ENCODE measurements at regions of chr1 and their contacts with region 1.

Region 1: DNA sequence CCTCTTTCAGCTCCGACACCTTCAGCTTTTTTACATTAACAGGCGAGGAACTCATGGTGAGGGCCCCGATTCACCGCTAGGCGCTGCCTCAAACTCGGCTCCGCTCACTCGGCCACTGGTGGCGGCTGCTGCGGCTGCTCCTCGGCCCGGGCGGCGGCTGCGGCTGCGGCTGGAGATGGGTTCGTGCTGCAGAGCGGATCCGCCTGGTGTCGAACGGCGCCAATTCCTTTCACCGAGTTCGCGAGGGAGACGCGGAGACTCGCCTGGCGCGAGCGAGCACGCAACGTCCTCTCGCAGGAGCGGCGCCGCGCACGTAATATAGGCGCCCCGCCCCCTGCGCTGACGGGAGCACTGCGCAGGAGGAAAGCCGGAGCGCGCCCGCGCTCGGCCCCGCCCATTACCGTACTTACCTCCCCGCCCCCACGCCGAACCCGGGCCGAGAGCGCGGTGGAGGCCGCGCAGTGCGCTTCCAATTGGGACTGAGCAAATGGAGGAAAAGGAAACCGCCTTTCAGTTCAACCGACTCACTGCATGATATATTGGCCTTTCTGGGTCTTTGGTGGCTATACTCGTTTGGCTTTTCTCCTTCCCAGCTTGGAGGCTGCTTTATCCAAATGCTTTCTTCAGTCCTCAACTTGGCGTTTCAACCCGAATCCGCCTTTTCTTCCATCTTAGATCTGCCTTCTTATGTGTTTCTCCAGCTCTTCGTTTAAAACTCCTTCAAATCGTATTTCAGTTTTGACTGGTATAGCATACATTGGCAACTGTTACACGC is at the start of gene HNRNPU:
- DNase-seq: peak; percentile 99
- H3K4me3 ChIP-seq: peak within 1 kb of the TSS; percentile 92 to 99 (median 98)
- H3K27ac ChIP-seq: peak within 1 kb of the TSS; percentile 99 to 100 (median 100)
- H3K4me1 ChIP-seq: peaks cover 0 to 41% (median 37%) of the 10 kb centered on the region in 4 donors
- H3K27me3 ChIP-seq: no peaks in the 10 kb centered on the region
- CTCF ChIP-seq: peak in 2 of 4 experiments; percentile 14 to 47
- EP300 ChIP-seq: peak in 2 of 4 donors; percentile 69 to 82
- POLR2A ChIP-seq: peak; percentile 92 to 97
- total RNA-seq, gene HNRNPU: 264 to 339 (median 282) TPM

Region 2: GRCh38 chr1:244652699-244653466 is 211.6 kb before region 1 on chr1 and contains the start of gene DESI2:
- intact Hi-C with region 1: loop called (anchors 10 kb)
- DNase-seq: peak; percentile 100
- H3K4me3 ChIP-seq: peak within 1 kb of the TSS; percentile 78 to 92 (median 86)
- H3K27ac ChIP-seq: peak within 1 kb of the TSS; percentile 83 to 98 (median 97)
- H3K4me1 ChIP-seq: peaks cover 0 to 32% (median 29%) of the 10 kb centered on the region in 4 donors
- H3K27me3 ChIP-seq: no peaks in the 10 kb centered on the region
- CTCF ChIP-seq: peak in 3 of 4 experiments; percentile 14 to 62 (median 42)
- EP300 ChIP-seq: no peak
- POLR2A ChIP-seq: peak; percentile 27 to 66
- total RNA-seq, gene DESI2: 34.2 to 37.3 (median 36.9) TPM

Region 3: DNA sequence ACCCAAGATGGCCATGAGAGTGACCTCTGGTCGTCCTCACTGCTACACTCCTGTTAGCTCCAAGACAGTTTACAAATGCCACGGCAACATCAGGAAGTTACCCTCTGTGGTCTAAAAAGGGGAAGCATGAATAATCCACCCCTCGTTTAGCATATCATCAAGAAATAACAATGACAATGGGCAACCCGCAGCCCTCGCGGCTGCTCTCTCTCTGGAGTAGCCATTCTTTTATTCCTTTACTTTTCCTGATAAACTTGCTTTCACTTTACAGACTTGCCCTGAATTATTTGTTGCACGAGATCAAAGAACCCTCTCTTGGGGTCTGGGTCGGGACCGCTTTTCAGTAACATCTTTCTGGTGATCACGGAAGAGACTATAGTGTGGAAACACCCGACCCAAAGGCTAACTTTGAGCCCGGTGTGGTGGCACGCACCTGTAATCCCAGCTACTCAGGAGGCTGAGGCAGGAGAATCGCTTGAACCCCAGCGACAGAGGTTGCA is 48.8 kb before region 1 on chr1:
- intact Hi-C with region 1: no loop called
- DNase-seq: no peak
- H3K4me3 ChIP-seq: peak overlapping the region in 2 of 4 donors; percentile 10 to 15
- H3K27ac ChIP-seq: no peak overlapping the region
- H3K4me1 ChIP-seq: no peaks in the 10 kb centered on the region
- H3K27me3 ChIP-seq: no peaks in the 10 kb centered on the region
- CTCF ChIP-seq: no peak
- EP300 ChIP-seq: no peak
- POLR2A ChIP-seq: no peak

Region 4: GRCh38 chr1:244918421-244919319 is 54.2 kb after region 1 on chr1:
- intact Hi-C with region 1: loop called (anchors 5 kb)
- DNase-seq: peak; percentile 59
- H3K4me3 ChIP-seq: peak overlapping the region; percentile 27 to 64 (median 49)
- H3K27ac ChIP-seq: peak overlapping the region in 2 of 4 donors; percentile 20 to 22
- H3K4me1 ChIP-seq: peaks cover 0 to 9% (median 7%) of the 10 kb centered on the region in 4 donors
- H3K27me3 ChIP-seq: no peaks in the 10 kb centered on the region
- CTCF ChIP-seq: no peak
- EP300 ChIP-seq: no peak
- POLR2A ChIP-seq: no peak

Region 5: DNA sequence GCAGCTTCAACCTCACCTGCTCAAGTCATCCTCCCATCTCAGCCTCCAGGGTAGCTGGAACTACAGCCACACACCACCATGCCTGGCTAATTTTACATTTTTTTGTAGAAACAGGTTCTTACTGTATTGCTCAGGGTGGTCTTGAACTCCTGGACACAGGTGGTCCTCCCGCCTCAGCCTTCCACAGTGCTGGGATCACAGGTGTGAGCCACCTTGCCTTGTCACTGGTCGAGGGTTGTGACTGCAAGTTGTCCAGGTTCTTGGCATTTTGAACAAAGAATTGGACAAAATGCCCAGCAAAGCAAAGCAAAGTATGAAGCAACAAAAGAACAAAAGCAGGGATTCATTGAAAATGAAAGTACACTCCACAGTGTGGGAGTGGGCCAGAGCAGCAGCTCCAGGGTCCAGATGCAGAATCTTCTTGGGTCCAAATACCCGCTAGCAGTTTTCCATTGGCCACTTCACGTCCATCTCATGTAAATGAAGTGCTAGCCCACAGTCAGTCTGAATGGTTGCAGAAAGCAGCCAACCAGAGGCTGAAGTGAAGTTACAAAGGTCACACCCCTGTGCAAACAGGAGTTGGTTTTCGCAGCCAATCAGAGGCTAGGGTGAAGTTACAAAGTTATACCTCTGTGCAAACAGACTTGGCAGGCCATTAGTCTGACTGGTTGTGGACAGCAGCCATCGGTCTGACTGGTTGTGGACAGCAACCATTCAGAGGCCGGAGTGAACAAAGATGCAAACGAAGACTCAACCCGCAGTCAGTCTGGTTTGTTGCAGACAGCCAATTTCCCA is 180.8 kb after region 1 on chr1:
- intact Hi-C with region 1: loop called (anchors 5 kb)
- DNase-seq: no peak
- H3K4me3 ChIP-seq: no peak overlapping the region
- H3K27ac ChIP-seq: peak overlapping the region in 1 of 4 donors; percentile 4
- H3K4me1 ChIP-seq: peaks cover 0 to 7% (median 0%) of the 10 kb centered on the region in 4 donors
- H3K27me3 ChIP-seq: no peaks in the 10 kb centered on the region
- CTCF ChIP-seq: no peak
- EP300 ChIP-seq: no peak
- POLR2A ChIP-seq: no peak

Measured in sigmoid colon (tissue), 7 donors.